Right cardiac atrium (tissue), 5 donors: ENCODE measurements at regions of chr1 and their contacts with region 1.

Region 1: DNA sequence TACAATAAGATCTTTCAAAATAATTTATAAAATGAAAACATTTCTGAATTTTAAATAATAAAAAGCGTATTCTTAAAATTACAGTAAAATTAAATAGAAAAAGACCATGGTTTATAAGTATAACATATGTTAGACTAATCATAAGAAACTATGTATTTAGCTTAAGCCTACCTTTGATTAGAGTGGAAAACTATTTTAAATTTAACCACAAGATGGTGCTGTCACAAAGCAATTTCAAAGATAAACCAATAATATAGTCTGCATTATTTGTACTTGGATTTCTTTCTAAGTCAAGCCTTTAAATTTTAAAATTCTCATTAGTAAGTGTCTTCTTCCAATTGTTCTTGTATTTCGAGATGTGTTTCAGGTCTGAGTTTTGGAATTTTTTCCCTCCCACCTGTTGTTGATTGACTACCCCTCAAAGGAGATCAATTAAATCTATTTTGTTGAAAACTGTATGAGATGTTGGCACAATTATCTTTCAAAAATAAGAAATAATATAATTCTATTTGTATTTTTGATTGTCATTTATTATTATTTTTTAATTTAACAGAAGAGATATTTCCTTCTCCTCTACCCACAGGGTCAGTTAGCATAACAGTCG is 459.8 kb downstream of the KCNT2 start:
- DNase-seq: no peak
- ATAC-seq: no peak
- H3K4me3 ChIP-seq: no peak overlapping the region
- H3K27ac ChIP-seq: no peak overlapping the region
- H3K4me1 ChIP-seq: no peaks in the 10 kb centered on the region
- H3K27me3 ChIP-seq: no peaks in the 10 kb centered on the region

Region 2: DNA sequence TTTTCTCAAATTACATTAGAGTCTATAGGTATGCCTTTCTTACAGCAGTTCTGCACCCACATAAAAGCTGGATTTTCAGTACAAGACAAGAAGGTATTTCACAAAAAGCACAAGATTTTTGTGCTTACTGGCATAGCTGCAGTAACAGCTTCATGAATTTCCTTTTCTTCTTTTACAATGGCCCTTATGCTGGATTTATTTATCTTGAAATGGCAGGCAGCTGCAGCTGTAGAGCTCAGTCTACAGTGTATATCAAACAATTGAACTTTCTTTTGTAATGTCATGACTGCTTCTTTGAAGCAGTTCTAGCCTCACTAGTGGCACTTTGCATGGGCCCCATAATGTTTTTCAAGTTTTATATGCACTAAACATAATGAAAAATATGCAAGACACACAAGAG is 50.5 kb before region 1 on chr1:
- intact Hi-C with region 1: no loop called
- DNase-seq: no peak
- ATAC-seq: no peak
- H3K4me3 ChIP-seq: no peak overlapping the region
- H3K27ac ChIP-seq: no peak overlapping the region
- H3K4me1 ChIP-seq: no peaks in the 10 kb centered on the region
- H3K27me3 ChIP-seq: no peaks in the 10 kb centered on the region

Region 3: DNA sequence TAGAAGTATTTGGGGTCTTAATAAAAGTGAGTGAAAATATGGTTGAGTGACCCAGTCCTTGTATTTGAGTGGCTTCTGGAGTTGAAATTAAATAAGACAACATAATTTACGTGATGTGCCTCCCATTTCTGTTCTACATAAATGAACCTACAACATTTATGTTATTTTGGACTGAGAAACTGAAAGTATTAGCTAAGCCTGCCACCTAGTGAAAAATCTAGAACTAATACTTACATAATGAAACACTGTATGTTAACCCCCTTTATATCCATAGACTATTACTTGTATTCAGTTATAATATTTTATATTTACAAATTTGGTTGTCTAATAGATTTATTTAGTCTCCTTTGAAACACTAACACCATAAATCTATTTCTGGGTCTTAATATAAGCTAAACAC is 160.9 kb after region 1 on chr1:
- intact Hi-C with region 1: loop called in 1 of 4 experiments (anchors 5 kb)
- DNase-seq: no peak
- ATAC-seq: no peak
- H3K4me3 ChIP-seq: no peak overlapping the region
- H3K27ac ChIP-seq: no peak overlapping the region
- H3K4me1 ChIP-seq: no peaks in the 10 kb centered on the region
- H3K27me3 ChIP-seq: no peaks in the 10 kb centered on the region

Region 4: GRCh38 chr1:196593955-196594354 is 445.5 kb after region 1 on chr1:
- intact Hi-C with region 1: no loop called
- DNase-seq: no peak
- ATAC-seq: no peak
- H3K4me3 ChIP-seq: no peak overlapping the region
- H3K27ac ChIP-seq: no peak overlapping the region
- H3K4me1 ChIP-seq: no peaks in the 10 kb centered on the region
- H3K27me3 ChIP-seq: no peaks in the 10 kb centered on the region

Region 5: DNA sequence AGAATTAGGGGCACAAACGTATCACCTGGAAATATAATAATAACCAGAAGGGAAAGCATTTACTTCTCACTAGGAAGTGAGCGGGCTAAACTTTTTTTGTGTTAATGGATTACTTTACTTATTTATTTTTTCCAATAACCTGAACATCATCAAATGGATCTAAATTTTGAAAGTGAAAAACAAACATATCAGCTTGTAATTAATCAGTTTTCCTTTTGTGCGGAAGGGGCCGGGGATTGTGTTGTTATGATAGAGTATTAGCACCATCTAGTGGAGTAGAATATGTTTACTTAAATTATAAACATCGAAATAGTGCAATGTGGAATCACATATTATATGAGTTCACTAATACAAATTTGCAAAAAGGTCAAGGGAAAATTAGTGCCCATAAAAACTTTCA is 512.4 kb after region 1 on chr1:
- intact Hi-C with region 1: loop called in 1 of 4 experiments (anchors 10 kb)
- DNase-seq: no peak
- ATAC-seq: peak in 1 of 2 donors; percentile 60
- H3K4me3 ChIP-seq: peak overlapping the region; percentile 38
- H3K27ac ChIP-seq: no peak overlapping the region
- H3K4me1 ChIP-seq: no peaks in the 10 kb centered on the region
- H3K27me3 ChIP-seq: no peaks in the 10 kb centered on the region